ENCODE measurements at regions of chr22 and their contacts with region 1.

Region 1: DNA sequence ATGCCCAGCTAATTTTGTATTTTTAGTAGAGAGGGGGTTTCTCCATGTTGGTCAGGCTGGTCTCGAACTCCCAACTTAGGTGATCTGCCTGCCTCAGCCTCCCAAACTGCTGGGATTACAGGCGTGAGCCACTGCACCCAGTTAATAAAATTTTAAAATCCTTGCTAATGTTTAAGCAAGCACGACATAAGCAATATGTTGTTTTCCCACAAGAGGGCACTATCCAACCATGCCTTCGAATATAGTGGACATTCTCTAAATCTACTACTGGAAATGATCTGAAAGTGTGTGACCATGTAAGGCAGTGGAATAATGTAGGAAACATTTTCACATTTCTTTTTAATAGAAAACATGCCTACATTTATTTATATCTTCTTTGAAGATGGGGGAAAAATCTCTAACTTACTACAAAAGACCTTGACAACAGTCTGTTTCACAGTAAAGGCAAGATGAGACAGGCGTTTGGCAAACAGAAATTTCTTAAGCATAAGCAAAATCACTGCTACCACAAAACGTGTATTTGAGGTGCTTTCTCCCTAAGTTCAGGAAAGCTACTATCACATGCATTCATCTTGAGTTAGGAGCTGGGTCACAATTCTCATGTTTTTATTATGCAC is 38.2 kb downstream of the PITPNB start:
- DNase-seq: peak; percentile 38
- H3K4me3 ChIP-seq: no peak overlapping the region
- H3K27ac ChIP-seq: peak overlapping the region; percentile 29 to 76
- H3K4me1 ChIP-seq: peaks cover 8 to 58% of the 10 kb centered on the region in 2 experiments
- H3K27me3 ChIP-seq: no peaks in the 10 kb centered on the region
- CTCF ChIP-seq: peak; percentile 89
- EP300 ChIP-seq: no peak
- RAD21 ChIP-seq: peak; percentile 87

Region 2: DNA sequence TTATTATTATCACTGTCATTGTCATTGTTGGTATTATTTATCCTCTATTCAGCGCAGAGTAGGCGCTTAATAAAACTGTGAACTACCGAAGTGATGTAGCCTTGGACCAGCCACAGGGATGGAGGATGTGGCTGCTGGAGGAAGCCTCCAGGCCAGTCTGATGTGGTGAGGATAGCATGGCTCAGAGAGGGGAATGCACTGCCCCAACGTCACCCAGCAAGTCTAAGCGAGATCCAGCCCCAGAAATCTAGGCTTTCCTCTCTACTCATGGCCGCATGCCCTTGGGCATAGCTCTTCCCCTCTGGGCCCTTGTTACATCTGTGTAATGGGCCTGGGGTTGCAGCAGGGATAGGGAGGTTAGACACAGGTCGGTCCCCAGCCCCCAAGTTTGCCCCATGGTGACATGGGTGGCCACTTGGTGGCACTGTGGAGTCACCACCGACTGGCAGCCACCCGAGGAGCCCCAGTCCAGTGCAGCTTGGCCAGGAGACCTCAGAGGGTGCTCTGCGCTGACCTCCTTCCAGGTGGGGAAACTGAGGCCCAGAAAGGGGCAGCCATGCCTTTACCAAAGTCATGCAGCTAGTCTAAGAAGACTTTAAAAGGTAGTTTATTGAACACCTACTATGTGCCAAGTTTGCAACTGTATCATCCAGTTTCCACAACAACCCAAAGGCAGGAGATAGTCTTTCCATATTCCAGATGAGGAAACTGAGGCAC is 475.1 kb before region 1 on chr22:
- CTCF ChIA-PET with region 1: interaction called, 13 read pairs
- POLR2A ChIA-PET with region 1: no interaction called
- DNase-seq: peak; percentile 82
- H3K4me3 ChIP-seq: no peak overlapping the region
- H3K27ac ChIP-seq: no peak overlapping the region
- H3K4me1 ChIP-seq: no peaks in the 10 kb centered on the region
- H3K27me3 ChIP-seq: no peaks in the 10 kb centered on the region
- CTCF ChIP-seq: peak; percentile 79
- EP300 ChIP-seq: no peak
- RAD21 ChIP-seq: peak; percentile 76

Region 3: GRCh38 chr22:27705408-27706080 is 175.3 kb before region 1 on chr22:
- CTCF ChIA-PET with region 1: no interaction called
- POLR2A ChIA-PET with region 1: no interaction called
- DNase-seq: no peak
- H3K4me3 ChIP-seq: no peak overlapping the region
- H3K27ac ChIP-seq: no peak overlapping the region
- H3K4me1 ChIP-seq: no peaks in the 10 kb centered on the region
- H3K27me3 ChIP-seq: no peaks in the 10 kb centered on the region; the same call in 1 of the 2 replicates
- CTCF ChIP-seq: no peak
- EP300 ChIP-seq: no peak
- RAD21 ChIP-seq: no peak

Region 4: DNA sequence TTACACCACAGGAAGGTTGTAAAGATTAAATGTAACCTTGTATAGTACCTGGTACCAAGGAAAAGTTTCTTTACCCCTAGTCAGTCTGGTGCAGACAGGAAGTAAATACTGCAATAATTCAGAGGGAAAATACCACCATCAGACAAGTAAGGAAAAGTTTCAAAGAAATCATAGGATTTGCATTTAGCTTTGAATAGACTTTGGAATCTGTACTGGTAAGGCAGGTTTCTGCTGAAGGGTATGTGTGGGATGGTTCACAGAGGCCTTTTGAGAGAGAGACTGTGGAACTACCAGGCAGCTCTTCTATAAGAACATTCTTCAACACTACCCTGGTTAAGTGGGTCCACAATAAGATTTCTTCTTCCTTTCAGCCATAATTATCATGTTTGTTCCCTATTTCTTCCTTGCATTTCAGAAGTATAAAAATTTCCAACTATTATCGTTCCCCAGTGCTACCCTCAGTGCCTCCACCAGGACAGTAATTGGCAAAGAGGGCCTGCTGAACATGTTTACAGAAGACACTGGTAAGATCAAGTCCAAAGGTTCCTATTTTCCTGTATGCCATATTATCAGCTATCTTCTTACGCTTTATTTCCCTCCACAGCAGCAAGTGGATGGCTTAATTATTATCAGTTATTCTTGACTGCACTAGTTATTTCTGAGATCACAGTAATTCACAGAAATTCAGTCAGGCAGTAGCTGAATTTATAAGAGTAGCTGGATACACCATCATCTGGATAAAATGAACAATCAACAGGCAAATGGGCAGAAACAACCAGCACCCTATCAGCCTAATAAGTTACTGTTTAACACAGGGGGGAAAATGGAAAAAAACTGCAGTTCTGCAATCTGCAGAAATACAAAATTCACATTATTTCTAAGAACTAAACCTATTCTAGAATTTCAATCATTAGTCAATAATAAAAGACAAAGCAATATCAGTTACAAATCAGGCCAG is 10.4 kb before region 1 on chr22:
- CTCF ChIA-PET with region 1: interaction called, 105 read pairs
- POLR2A ChIA-PET with region 1: no interaction called
- DNase-seq: no peak
- H3K4me3 ChIP-seq: no peak overlapping the region
- H3K27ac ChIP-seq: no peak overlapping the region; a peak in 1 of 4 replicates
- H3K4me1 ChIP-seq: peaks cover 23 to 28% of the 10 kb centered on the region in 2 experiments; a peak in 3 of 4 replicates
- H3K27me3 ChIP-seq: no peaks in the 10 kb centered on the region
- CTCF ChIP-seq: no peak
- EP300 ChIP-seq: no peak
- RAD21 ChIP-seq: no peak

Region 5: DNA sequence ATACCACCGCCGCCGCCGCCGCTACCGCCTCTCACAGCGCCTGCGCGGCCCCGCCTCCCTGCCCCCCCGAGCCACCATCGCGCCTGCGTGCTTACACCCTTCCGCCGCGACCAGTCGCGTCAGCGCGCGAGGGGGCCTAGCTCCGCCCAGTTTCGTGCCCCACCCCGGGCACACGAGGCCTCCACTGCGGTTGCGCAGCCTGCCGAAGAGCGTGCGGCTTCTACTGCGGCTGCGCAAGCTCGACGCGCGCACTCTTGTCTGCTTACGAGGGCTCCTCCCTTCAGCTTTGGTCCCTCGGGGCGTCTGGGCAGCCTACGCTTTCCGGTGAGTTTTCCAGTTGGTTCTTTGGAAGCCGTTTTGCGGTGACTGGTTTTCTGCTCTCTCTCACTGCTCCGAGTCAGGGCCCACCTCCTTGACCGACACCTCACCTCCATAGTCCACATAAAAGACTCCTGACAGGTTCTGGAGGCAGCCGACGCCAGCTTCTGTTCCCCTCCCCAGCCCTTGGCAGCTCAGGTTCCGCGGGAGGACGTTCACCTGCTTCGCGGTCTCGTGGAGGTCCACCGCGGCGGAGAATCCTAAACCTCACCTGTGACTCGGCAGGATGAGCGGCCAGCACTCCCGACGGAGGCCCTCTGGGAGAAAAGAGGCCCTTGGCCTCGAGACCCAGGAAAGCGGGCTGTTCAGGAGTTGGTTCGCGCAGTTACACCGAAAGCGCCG is 38.5 kb after region 1 on chr22 and contains the start of gene PITPNB:
- CTCF ChIA-PET with region 1: interaction called, 150 read pairs
- POLR2A ChIA-PET with region 1: no interaction called
- DNase-seq: peak; percentile 100
- H3K4me3 ChIP-seq: peak within 1 kb of the TSS; percentile 86 to 90
- H3K27ac ChIP-seq: peak within 1 kb of the TSS; percentile 92 to 97
- H3K4me1 ChIP-seq: peaks cover 25 to 28% of the 10 kb centered on the region in 2 experiments; a peak in 3 of 4 replicates
- H3K27me3 ChIP-seq: no peaks in the 10 kb centered on the region
- CTCF ChIP-seq: no peak
- EP300 ChIP-seq: no peak
- RAD21 ChIP-seq: no peak
- polyA plus RNA-seq, gene PITPNB: 32.3 and 38.7 TPM in 2 replicates

Region 6: GRCh38 chr22:28009272-28009827 is 128.5 kb after region 1 on chr22:
- CTCF ChIA-PET with region 1: interaction called, 630 read pairs
- POLR2A ChIA-PET with region 1: interaction called, 3 read pairs
- DNase-seq: peak; percentile 89
- H3K4me3 ChIP-seq: no peak overlapping the region; a peak in 1 of 4 replicates
- H3K27ac ChIP-seq: peak overlapping the region in 1 of 2 experiments; percentile 3; a peak in 1 of 4 replicates
- H3K4me1 ChIP-seq: peaks cover 0 to 28% of the 10 kb centered on the region in 2 experiments; a peak in 2 of 4 replicates
- H3K27me3 ChIP-seq: no peaks in the 10 kb centered on the region
- CTCF ChIP-seq: peak; percentile 98
- EP300 ChIP-seq: 0 out of 4 replicates have a peak, but pooled peaks of 1 of the 2 experiments have one; percentile 7
- RAD21 ChIP-seq: peak; percentile 99

Measured in SK-N-SH (cell line).